ENCODE measurements at regions of chr19 and their contacts with region 1.

Region 1: GRCh38 chr19:29844891-29845572 is 33.2 kb downstream of the CCNE1 start:
- DNase-seq: peak in 9 of 10 donors; percentile 95 to 99 (median 97)
- ATAC-seq: peak; percentile 81 to 83
- H3K4me3 Mint-ChIP-seq: peak overlapping the region; percentile 89 to 98 (median 95)
- H3K27ac Mint-ChIP-seq: peak overlapping the region; percentile 91 to 98 (median 96)
- H3K4me1 Mint-ChIP-seq: peaks cover 11 to 14% (median 12%) of the 10 kb centered on the region in 4 donors
- H3K27me3 Mint-ChIP-seq: peaks cover 0 to 8% (median 0%) of the 10 kb centered on the region in 5 donors

Region 2: DNA sequence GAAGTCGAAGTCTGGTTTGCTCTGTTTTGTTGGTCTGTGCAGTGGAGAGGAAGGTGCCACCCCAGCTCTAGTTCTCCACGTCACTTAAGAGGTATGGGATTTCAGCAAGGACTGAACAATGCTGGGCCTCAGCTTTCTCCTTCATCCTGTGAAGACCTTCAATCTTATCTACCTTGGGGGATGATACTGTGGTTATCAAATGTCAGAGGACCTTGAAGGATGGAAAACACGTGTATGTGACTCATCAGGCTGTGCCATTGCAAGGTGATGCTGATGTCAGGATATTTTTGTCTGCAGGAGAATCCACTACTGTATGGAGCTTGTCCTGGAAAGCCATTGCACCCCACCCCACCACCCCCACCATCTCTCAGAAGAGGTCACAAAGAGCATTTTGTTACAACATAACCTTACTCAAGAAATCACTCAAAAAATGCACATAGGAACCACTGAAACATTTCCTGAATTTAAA is 550.7 kb before region 1 on chr19:
- POLR2A ChIA-PET with region 1: no interaction called
- DNase-seq: no peak
- ATAC-seq: no peak
- H3K4me3 Mint-ChIP-seq: no peak overlapping the region
- H3K27ac Mint-ChIP-seq: peak overlapping the region in 1 of 10 donors; percentile 33
- H3K4me1 Mint-ChIP-seq: no peaks in the 10 kb centered on the region
- H3K27me3 Mint-ChIP-seq: peaks cover 6 to 58% (median 14%) of the 10 kb centered on the region in 5 donors

Region 3: DNA sequence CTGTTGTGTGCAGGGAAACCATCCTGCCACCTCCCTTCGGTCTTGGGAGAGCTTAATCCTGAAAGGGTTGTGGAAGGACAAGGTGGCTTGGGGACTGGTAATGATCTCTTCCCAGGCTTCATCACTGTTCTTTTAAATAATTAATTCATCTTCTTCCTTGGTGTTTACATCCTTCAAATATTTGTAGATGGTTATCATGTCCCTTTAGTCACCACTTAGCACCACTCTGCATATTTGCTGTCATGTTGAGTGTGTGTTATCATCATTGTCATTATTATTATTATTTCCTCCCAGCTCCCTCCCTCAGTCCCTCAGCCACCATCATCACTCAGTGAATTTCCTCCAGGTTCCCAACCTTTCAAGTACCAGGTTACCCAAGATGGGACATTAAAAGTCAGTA is 124.2 kb before region 1 on chr19:
- POLR2A ChIA-PET with region 1: no interaction called
- DNase-seq: no peak
- ATAC-seq: no peak
- H3K4me3 Mint-ChIP-seq: no peak overlapping the region
- H3K27ac Mint-ChIP-seq: peak overlapping the region in 1 of 10 donors; percentile 49
- H3K4me1 Mint-ChIP-seq: peaks cover 12 to 32% (median 26%) of the 10 kb centered on the region in 4 donors
- H3K27me3 Mint-ChIP-seq: peaks cover 0 to 1% (median 0%) of the 10 kb centered on the region in 5 donors

Region 4: DNA sequence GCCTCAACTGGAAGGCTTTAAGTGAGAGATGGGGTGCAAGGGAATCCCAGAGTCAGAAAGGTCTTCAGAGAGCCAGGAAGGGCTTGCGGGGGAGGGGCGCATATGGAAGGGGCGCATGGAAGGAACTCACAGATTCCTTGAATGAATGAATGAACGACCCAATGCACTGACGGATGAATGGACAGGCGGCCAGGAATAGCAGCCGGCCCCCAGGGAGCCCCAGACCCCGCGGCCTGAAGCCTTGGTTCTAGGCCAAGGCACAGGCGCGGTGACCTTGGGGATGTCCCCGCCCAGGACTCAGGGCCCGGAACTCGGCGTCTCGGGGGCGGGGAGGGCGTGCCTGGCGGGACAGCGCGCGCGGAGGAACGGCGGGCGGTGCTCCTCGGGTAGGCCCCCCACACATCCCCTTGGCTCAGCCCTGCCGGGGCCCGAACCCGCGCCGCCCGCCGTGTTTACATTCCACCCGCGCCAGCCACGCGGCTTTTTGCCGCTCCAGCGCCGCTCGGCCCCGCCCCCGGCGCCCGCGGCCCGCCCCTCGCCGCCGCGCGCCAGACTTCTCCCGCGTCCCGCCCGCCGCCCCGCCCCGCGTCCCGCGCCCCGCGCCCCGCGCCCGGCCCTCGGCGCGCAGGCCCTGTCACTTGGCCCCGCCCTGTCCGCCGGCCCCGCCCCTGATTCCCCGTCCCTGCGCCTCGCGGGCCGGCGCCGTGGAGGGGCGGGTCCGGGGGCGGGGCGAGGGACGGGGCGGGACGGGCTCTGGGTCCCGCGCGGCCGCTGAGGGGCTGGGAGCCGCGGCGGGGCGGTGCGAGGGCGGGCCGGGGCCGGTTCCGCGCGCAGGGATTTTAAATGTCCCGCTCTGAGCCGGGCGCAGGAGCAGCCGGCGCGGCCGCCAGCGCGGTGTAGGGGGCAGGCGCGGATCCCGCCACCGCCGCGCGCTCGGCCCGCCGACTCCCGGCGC is 33.6 kb before region 1 on chr19 and contains the start of gene CCNE1:
- POLR2A ChIA-PET with region 1: interaction called, 28 read pairs
- DNase-seq: peak; percentile 83 to 99 (median 92)
- ATAC-seq: peak; percentile 88 to 90
- H3K4me3 Mint-ChIP-seq: peak within 1 kb of the TSS; percentile 83 to 91 (median 89)
- H3K27ac Mint-ChIP-seq: peak within 1 kb of the TSS; percentile 75 to 94 (median 90)
- H3K4me1 Mint-ChIP-seq: peaks cover 6 to 18% (median 16%) of the 10 kb centered on the region in 4 donors
- H3K27me3 Mint-ChIP-seq: no peaks in the 10 kb centered on the region
- polyA plus RNA-seq, gene CCNE1: 1.5 to 3.7 (median 2.6) TPM

Region 5: DNA sequence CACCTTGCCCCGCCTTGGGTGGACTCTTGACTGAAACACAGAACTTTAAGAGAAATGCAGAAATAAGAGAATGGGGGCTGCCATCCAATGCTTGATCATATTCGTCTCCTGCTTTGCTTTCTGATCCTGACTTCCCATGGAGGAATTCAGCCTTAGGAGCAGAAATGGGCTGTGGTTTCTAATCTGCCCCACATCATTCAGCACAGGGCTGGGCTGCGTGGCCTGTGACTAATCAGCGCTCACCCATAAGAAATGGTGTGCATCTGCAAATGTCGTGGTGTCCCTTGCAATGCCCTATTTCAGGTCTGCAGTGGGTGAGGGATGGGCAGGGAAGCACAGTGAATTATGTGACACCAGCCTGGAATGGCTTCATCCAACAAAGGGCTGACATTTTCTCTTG is 36.4 kb after region 1 on chr19:
- POLR2A ChIA-PET with region 1: no interaction called
- DNase-seq: no peak
- ATAC-seq: no peak
- H3K4me3 Mint-ChIP-seq: no peak overlapping the region
- H3K27ac Mint-ChIP-seq: no peak overlapping the region
- H3K4me1 Mint-ChIP-seq: peaks cover 0 to 6% (median 2%) of the 10 kb centered on the region in 4 donors
- H3K27me3 Mint-ChIP-seq: peaks cover 7 to 26% (median 13%) of the 10 kb centered on the region in 5 donors

Region 6: DNA sequence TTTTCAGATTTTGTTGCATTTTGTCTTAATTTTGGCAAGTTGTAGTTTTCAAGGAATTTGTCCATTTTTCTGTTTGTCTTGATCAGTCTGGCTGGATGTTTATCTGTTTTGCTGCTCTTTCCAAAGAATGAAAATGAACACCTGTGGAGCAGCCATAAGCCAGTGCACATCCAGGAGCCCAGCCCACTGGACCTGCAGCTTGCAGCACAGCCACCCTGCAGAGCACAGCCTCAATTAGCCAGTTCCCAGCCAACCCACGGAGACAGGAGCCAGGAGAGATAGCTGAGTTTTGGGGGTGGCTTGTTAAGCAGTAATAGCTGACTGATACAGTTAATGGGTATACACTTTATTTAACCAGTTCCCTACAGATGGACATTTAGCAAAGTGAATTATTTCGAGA is 59.0 kb after region 1 on chr19:
- POLR2A ChIA-PET with region 1: no interaction called
- DNase-seq: no peak
- ATAC-seq: no peak
- H3K4me3 Mint-ChIP-seq: no peak overlapping the region
- H3K27ac Mint-ChIP-seq: no peak overlapping the region
- H3K4me1 Mint-ChIP-seq: no peaks in the 10 kb centered on the region
- H3K27me3 Mint-ChIP-seq: peaks cover 0 to 12% (median 4%) of the 10 kb centered on the region in 5 donors

Region 7: DNA sequence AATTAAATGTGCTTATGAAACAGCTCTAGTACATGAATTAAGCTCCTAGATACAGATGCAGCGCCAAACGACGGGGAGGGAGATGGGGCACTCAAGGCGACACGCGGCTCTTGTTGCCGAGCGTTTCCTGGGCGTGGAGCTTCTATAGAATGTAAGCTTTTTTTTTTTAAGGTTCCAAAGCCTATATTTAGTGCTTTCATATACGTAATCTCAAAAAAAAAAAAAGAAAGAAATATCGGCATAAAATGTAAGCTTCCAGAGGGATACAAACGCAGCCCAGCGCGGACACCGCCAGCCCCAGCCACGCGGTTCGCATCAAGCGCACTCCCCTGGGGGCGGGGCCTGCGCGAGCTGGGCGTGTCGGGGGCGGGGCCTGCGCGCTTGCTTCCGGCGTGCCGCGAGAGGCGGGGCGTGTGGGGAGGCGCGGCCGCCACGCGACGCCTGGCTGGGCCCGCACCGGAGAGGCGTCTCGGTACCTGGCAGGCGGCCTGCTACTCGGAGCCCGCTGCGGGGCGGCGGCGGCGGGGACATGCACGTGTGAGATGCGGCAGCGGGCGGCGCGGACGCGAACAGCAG is 96.9 kb after region 1 on chr19 and contains the start of gene URI1:
- POLR2A ChIA-PET with region 1: interaction called, 23 read pairs
- DNase-seq: peak; percentile 86 to 99 (median 93)
- ATAC-seq: peak; percentile 85 to 88
- H3K4me3 Mint-ChIP-seq: peak within 1 kb of the TSS; percentile 92 to 98 (median 95)
- H3K27ac Mint-ChIP-seq: peak within 1 kb of the TSS; percentile 82 to 98 (median 95)
- H3K4me1 Mint-ChIP-seq: peaks cover 22 to 49% (median 43%) of the 10 kb centered on the region in 4 donors
- H3K27me3 Mint-ChIP-seq: peaks cover 0 to 3% (median 0%) of the 10 kb centered on the region in 5 donors
- polyA plus RNA-seq, gene URI1: 17.3 to 41.7 (median 37.7) TPM

Measured in naive thymus-derived CD8-positive, alpha-beta T cell (primary cell).